Dorsolateral prefrontal cortex (tissue), 120 donors: ENCODE measurements at regions of chr4 and their contacts with region 1.

Region 1: DNA sequence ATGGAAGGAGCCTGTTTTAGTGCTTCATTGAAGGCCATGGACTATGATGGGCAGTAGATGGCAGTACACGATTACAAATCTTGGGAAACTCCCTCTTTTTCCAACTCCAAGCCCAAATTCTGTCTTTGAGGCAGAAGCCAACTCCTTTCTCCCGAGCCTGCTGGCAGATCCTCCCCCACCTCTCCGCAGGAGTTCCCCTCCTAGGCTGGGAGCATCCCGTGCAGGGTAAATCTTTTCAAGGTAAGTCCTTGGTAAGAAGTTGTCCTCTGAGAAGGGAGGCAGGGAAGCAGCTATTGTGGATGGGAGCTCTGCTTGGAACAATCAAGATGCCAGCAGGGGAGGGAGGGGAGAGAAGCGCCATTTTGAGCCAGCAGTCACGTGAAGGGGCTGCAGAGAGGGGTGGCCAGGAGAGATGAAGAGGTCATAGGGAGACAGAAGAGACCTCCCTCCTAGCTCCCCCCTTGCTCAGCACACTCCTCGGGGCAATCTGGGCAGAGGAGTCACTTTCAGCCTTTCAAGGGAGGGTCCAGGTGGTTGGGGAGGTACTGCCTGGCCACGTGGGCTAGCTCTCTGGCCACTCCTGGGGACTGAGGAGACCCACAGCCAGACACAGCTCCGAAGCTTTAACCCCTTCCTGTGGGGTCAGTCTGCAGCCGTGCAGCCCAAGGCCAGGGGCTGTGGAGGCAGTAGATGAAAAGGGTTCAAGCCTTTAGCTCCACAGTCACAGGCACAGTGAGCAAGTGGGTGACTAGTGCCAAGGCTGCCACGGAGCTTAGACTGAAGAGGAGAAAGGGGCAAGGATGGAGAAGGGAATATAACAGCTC is 9.6 kb downstream of the CC2D2A start:
- DNase-seq: peak; percentile 28 to 70 (median 60)
- H3K4me3 ChIP-seq: peak overlapping the region; percentile 51 to 94 (median 67)
- H3K27ac ChIP-seq: peak overlapping the region; percentile 57 to 96 (median 89)
- H3K27me3 ChIP-seq: no peaks in the 10 kb centered on the region
- CTCF ChIP-seq: peak; percentile 24 to 90 (median 83)

Region 2: GRCh38 chr4:15420642-15421041 is 58.7 kb before region 1 on chr4:
- intact Hi-C with region 1: no loop called
- DNase-seq: peak in 1 of 10 donors; percentile 49
- H3K4me3 ChIP-seq: no peak overlapping the region
- H3K27ac ChIP-seq: peak overlapping the region in 11 of 59 donors; percentile 3 to 46 (median 17)
- H3K27me3 ChIP-seq: no peaks in the 10 kb centered on the region
- CTCF ChIP-seq: peak in 13 of 56 donors; percentile 5 to 34 (median 15)

Region 3: GRCh38 chr4:15655229-15656037 is 176.1 kb after region 1 on chr4 and contains the start of gene FBXL5:
- intact Hi-C with region 1: loop called (anchors 1 to 2 kb)
- DNase-seq: peak; percentile 60 to 84 (median 68)
- H3K4me3 ChIP-seq: peak within 1 kb of the TSS; percentile 64 to 90 (median 80)
- H3K27ac ChIP-seq: peak within 1 kb of the TSS; percentile 98 to 100 (median 100)
- H3K27me3 ChIP-seq: no peaks in the 10 kb centered on the region
- CTCF ChIP-seq: peak in 7 of 56 donors; percentile 3 to 34 (median 11)
- total RNA-seq, gene FBXL5: 72.7 to 124 (median 93.8) TPM

Region 4: DNA sequence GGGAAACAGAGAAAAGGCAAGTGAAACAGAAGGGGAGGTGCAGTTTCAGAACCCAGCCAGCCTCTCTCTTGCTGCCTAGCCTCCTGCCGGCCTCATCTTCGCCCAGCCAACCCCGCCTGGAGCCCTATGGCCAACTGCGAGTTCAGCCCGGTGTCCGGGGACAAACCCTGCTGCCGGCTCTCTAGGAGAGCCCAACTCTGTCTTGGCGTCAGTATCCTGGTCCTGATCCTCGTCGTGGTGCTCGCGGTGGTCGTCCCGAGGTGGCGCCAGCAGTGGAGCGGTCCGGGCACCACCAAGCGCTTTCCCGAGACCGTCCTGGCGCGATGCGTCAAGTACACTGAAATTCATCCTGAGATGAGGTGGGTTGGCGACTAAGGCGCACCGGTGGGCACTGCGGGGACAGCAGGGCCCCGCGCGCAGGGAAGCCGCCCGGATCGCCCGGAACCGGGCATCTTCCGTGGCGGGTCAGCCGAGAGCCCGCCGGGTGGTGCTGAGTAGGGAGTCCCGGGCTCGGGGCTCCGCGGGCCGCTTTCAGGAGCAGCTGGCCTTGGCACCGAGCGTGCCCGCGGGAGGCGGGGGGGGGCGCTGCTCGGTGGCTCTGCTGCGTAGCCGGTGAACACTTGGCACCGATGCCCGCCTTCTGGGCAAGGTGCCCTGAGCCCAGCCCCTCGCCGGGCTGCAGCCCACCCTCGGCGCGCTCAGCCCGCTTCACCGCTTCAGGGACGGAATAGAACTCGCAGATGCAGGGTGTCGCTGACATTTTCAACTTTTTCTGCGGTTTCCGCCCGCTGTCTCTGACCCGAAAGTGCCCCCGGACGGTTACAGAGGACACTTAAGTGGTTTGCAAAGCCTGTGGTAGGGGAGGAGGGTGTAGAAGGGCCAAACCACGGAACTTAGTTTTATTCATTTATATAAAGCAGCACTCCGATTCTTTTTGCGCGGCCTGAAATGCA is 299.3 kb after region 1 on chr4 and contains the start of gene CD38:
- intact Hi-C with region 1: loop called in 1 of 2 experiments (anchors 10 kb)
- DNase-seq: peak in 6 of 10 donors; percentile 14 to 63 (median 38)
- H3K4me3 ChIP-seq: peak within 1 kb of the TSS; percentile 45 to 80 (median 64)
- H3K27ac ChIP-seq: peak within 1 kb of the TSS in 38 of 59 donors; percentile 9 to 78 (median 54)
- H3K27me3 ChIP-seq: peaks cover 0 to 21% (median 0%) of the 10 kb centered on the region in 45 donors
- CTCF ChIP-seq: peak in 2 of 56 donors; percentile 8 to 16
- total RNA-seq, gene CD38: 1.1 to 23.5 (median 7.0) TPM

Region 5: DNA sequence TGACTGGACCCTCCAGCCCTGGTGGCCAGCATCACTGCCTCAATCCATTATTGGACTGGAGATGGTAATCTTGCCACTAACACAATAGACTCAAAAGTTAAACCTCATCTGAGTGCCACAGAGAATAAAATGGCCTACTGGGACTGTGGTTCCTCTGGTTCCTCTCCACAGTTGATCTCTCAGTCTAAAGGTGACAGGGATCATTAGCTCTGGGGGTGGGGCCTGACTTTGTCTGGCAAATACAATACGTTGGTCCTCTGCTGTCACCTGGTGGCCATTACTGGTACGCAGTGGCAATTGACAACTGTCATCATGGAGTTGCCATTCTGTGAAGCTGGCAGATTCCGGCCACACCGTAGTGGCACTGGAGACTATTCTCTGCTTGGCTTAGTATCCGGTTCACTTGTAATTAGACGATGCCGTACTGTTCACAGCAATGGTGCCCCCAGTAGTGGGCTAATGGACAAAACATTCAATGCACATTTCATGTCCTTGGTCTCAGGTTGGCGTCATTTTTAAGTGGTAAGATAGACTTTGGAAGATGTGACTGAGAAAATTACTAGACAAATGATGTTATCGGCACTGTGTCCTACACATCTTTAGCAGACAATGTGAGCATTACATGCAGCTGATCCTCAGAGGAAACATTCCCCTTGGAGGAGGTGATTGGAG is 477.0 kb after region 1 on chr4:
- intact Hi-C with region 1: loop called in 1 of 2 experiments (anchors 2 kb)
- DNase-seq: peak in 9 of 10 donors; percentile 14 to 80 (median 54)
- H3K4me3 ChIP-seq: no peak overlapping the region
- H3K27ac ChIP-seq: no peak overlapping the region
- H3K27me3 ChIP-seq: peaks cover 0 to 3% (median 0%) of the 10 kb centered on the region in 45 donors
- CTCF ChIP-seq: peak; percentile 43 to 83 (median 75)

Region 6: DNA sequence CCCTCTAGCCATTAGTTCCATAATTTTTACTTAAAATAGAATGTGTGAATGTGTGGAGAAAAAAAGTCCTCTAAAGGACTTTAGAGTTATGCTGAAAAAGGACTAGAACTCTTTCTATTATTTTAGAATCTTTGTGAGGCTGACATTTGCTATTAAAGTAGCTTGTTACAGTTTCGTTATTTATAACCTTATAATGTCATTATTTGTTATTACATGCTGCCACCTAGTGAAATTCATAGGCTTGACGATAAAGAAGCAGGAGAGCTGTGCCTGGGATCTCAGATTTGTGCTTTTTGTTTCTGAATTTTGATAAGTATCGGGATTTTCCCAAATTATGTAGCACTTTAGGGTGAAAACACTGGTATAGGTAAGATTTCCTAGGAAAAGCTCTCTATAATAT is 785.5 kb after region 1 on chr4:
- intact Hi-C with region 1: loop called in 1 of 2 experiments (anchors 10 kb)
- DNase-seq: no peak
- H3K4me3 ChIP-seq: no peak overlapping the region
- H3K27ac ChIP-seq: no peak overlapping the region
- H3K27me3 ChIP-seq: no peaks in the 10 kb centered on the region
- CTCF ChIP-seq: peak; percentile 53 to 93 (median 70)